ENCODE measurements at regions of chr10 and their contacts with region 1.

Region 1: DNA sequence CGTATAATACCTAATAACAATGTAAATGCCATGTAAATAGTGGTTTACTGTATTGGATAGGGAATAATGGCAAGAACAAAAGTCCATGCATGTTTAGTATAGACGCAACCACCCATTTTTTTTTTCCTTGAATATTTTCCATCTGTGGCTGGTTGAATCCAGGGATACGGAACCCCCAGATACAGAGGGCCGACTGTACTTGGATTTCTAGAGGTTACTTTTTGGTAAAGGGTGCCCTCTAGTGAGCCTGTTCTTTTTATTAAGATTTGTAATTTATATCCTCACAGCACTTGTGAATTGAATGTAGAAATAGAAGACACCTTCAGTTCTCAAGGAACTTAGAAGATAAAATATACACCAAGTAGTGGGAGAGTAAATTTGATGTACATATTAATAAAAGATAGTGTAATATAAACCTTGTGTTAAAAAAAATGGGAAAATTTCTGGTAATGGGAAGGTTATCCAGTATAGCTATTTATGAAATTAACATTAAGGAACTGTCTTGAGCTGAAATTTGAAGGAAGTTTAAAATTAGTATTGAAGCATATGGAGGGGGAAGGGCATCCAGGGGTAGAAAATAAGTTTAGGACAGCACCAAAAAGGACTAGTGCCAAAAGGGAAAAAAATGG is 32.0 kb downstream of the EXOC6 start:
- DNase-seq: no peak
- H3K4me3 Mint-ChIP-seq: no peak overlapping the region
- H3K27ac Mint-ChIP-seq: no peak overlapping the region
- H3K4me1 Mint-ChIP-seq: peaks cover 14% of the 10 kb centered on the region
- H3K27me3 Mint-ChIP-seq: no peaks in the 10 kb centered on the region

Region 2: GRCh38 chr10:92848441-92849233 is 31.7 kb before region 1 on chr10 and contains the start of gene EXOC6:
- CTCF ChIA-PET with region 1: interaction called, 10 read pairs
- DNase-seq: peak; percentile 89
- H3K4me3 Mint-ChIP-seq: peak within 1 kb of the TSS; percentile 85
- H3K27ac Mint-ChIP-seq: peak within 1 kb of the TSS; percentile 92
- H3K4me1 Mint-ChIP-seq: peaks cover 38% of the 10 kb centered on the region
- H3K27me3 Mint-ChIP-seq: peaks cover 5% of the 10 kb centered on the region